Heart left ventricle (tissue), 16 donors: ENCODE measurements at regions of chr17 and their contacts with region 1.

Region 1: DNA sequence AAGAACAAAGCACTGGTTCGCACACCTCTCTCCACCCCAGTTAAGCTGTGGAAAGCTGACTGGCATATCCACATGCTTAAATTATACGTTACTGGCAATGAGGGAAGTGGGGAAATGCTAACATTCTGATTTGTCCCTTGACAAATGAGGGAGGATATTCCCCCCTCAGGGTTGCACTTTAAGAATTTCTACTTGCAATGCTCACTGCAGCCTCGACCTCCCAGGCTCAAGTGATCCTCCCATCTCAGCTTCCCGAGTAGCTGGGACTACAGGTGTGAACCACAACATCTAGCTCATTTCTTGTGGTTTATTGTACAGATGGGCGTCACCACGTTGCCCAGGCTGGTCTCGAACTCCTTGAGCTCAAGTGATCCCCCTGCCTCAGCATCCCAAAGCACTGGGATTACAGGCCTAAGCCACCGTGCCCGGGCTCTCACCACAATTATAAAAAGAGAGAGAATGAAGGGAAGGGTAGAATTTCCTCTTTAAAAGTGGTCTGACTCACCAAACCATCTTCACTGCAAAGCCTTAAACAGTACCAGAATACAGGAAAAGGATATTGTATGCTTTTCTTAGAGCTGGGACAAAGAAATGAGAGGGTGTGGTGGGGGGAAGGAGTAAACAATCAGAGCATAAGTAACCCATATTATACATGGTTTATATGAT is 38.9 kb downstream of the KANSL1 start:
- DNase-seq: no peak
- ATAC-seq: peak in 1 of 4 donors; percentile 7
- H3K4me3 ChIP-seq: no peak overlapping the region
- H3K27ac ChIP-seq: peak overlapping the region in 4 of 12 donors; percentile 16 to 53 (median 28)
- H3K4me1 ChIP-seq: peaks cover 43 to 100% (median 92%) of the 10 kb centered on the region in 12 donors
- H3K27me3 ChIP-seq: no peaks in the 10 kb centered on the region
- CTCF ChIP-seq: no peak
- POLR2A ChIP-seq: no peak

Region 2: GRCh38 chr17:46139432-46140210 is 14.7 kb before region 1 on chr17:
- intact Hi-C with region 1: loop called in 1 of 10 experiments (anchors 2 kb)
- DNase-seq: no peak
- ATAC-seq: peak in 1 of 4 donors; percentile 25
- H3K4me3 ChIP-seq: no peak overlapping the region
- H3K27ac ChIP-seq: peak overlapping the region in 1 of 12 donors; percentile 33
- H3K4me1 ChIP-seq: peaks cover 3 to 96% (median 78%) of the 10 kb centered on the region in 12 donors
- H3K27me3 ChIP-seq: no peaks in the 10 kb centered on the region
- CTCF ChIP-seq: no peak
- POLR2A ChIP-seq: no peak

Region 3: DNA sequence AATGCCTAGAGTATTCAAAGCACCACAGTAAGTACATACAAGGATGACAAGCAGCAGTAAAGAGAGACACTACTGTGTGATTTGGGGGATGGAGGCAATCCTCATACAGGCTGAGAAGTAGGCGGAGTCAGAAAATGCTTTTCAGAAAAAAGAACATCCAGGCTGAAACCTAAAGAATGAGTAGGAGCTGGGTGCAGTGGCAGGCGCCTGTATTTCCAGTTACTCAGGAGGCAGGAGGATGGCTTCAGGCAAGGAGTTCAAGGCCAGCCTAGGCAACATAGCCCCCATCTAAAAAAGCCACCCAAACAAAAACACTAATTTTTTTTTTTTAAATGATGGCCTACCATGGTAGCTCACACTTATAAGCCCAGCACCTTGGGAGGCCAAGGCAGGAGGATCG is 28.7 kb after region 1 on chr17:
- intact Hi-C with region 1: loop called in 1 of 10 experiments (anchors 5 kb)
- DNase-seq: no peak
- ATAC-seq: no peak
- H3K4me3 ChIP-seq: no peak overlapping the region
- H3K27ac ChIP-seq: no peak overlapping the region
- H3K4me1 ChIP-seq: peaks cover 0 to 95% (median 88%) of the 10 kb centered on the region in 12 donors
- H3K27me3 ChIP-seq: no peaks in the 10 kb centered on the region
- CTCF ChIP-seq: no peak
- POLR2A ChIP-seq: no peak

Region 4: GRCh38 chr17:46193626-46194392 is 39.5 kb after region 1 on chr17:
- intact Hi-C with region 1: loop called in 3 of 10 experiments (anchors 5 kb)
- DNase-seq: peak; percentile 95 to 99 (median 98)
- ATAC-seq: peak; percentile 90 to 97 (median 95)
- H3K4me3 ChIP-seq: peak overlapping the region; percentile 70 to 100 (median 88)
- H3K27ac ChIP-seq: peak overlapping the region; percentile 98 to 100 (median 99)
- H3K4me1 ChIP-seq: peaks cover 0 to 49% (median 35%) of the 10 kb centered on the region in 12 donors
- H3K27me3 ChIP-seq: no peaks in the 10 kb centered on the region
- CTCF ChIP-seq: peak in 7 of 12 donors; percentile 7 to 54 (median 36)
- POLR2A ChIP-seq: peak in 1 of 2 donors; percentile 82